ENCODE measurements at regions of chr1 and their contacts with region 1.

Region 1: GRCh38 chr1:67430352-67431155 is at the start of gene SERBP1:
- DNase-seq: peak; percentile 98
- ATAC-seq: peak; percentile 93
- H3K4me3 ChIP-seq: peak within 1 kb of the TSS; percentile 93
- H3K27ac ChIP-seq: peak within 1 kb of the TSS; percentile 71
- H3K4me1 ChIP-seq: peaks cover 16% of the 10 kb centered on the region
- H3K27me3 ChIP-seq: no peaks in the 10 kb centered on the region
- CTCF ChIP-seq: no peak
- total RNA-seq, gene SERBP1: 256 and 337 TPM in 2 replicates

Region 2: GRCh38 chr1:67053785-67054772 is 376.5 kb before region 1 on chr1 and contains the start of gene SLC35D1:
- CTCF ChIA-PET with region 1: no interaction called
- POLR2A ChIA-PET with region 1: no interaction called
- intact Hi-C with region 1: loop called (anchors 2 kb)
- DNase-seq: peak; percentile 54
- ATAC-seq: peak; percentile 64
- H3K4me3 ChIP-seq: peak within 1 kb of the TSS; percentile 92
- H3K27ac ChIP-seq: peak within 1 kb of the TSS; percentile 68
- H3K4me1 ChIP-seq: peaks cover 23% of the 10 kb centered on the region
- H3K27me3 ChIP-seq: no peaks in the 10 kb centered on the region
- CTCF ChIP-seq: no peak
- total RNA-seq, gene SLC35D1: 5.3 and 6.1 TPM in 2 replicates

Region 3: DNA sequence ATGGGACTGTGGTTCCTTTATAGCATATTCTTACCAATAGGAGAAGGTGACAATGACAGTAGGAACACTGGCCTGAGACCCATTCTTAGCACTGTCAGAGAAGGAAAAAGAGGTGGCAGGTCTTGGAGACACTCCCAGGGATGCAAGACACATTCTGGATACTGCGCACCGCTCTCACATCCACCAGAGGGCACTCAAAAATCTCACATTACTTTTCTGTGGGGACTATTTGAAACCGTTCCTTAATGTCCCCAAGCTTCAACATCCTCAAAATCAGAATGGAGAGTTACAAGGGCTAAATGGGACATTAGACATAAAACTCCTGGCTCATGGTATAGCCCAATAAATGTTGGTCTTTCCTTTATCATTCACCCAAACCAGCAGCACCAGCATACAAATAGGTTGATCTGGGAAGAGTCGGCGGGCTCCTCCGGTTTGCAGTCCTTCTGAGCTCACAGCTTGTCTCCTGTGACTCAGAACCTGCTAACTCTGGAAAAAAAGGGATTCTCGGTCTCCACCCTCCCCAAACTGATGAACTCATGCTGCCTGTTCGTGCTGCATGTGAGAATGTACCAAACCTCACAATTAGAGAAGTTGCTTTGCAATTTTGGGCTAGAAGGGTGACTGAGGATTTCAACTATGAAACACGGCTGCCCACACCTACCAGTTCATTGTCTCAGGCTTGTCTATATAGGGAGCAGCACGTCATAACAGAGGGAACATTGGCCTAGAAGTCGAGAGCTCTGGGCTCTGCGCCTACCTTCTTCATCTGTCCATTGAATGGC is 82.7 kb before region 1 on chr1:
- CTCF ChIA-PET with region 1: interaction called, 4 read pairs
- POLR2A ChIA-PET with region 1: no interaction called
- intact Hi-C with region 1: loop called (anchors 5 kb)
- DNase-seq: peak; percentile 76
- ATAC-seq: peak; percentile 94
- H3K4me3 ChIP-seq: peak overlapping the region; percentile 41; the same call in 1 of the 2 replicates
- H3K27ac ChIP-seq: no peak overlapping the region
- H3K4me1 ChIP-seq: peaks cover 13% of the 10 kb centered on the region
- H3K27me3 ChIP-seq: no peaks in the 10 kb centered on the region
- CTCF ChIP-seq: peak; percentile 92

Region 4: DNA sequence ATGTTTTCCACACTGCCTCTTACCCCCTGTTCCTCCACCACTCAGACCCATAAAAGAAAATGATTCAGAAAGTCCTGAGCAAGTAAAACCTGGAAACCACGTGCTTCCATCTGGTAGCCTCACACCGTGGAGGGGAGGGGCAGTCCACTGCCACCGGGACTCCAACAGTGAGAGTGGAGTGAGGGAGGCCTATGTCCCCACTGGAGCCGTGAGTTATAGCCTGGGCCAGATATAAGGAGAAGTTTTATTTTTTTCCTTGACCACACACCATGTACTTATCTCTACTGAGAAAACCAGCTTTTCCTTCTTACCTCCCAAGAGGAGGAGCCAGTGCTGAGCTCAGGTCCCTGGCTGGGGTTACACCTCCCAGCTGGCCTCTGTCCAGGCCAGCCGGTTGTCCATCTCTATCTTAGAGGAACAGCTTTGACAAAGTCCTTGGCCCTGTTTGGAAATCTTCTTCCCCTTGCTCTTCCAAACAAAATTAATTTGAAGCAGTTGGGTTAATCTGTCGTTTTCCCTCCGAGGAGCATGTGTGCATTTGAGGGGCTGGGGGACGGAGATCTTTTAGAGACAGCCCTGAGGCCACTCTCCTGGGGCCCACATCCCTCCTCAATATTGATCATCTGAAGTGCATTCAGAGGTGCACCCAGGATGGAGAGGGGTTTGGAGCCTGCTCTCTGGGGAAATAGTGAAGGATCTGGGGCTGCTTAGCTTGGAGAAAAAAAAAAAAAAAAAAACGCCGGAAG is 48.8 kb after region 1 on chr1:
- CTCF ChIA-PET with region 1: no interaction called
- POLR2A ChIA-PET with region 1: no interaction called
- intact Hi-C with region 1: loop called (anchors 5 kb)
- DNase-seq: peak; percentile 57
- ATAC-seq: peak; percentile 93
- H3K4me3 ChIP-seq: no peak overlapping the region
- H3K27ac ChIP-seq: no peak overlapping the region
- H3K4me1 ChIP-seq: peaks cover 7% of the 10 kb centered on the region; the same call in 1 of the 2 replicates
- H3K27me3 ChIP-seq: no peaks in the 10 kb centered on the region
- CTCF ChIP-seq: no peak

Region 5: GRCh38 chr1:67489643-67490042 is 59.1 kb after region 1 on chr1:
- CTCF ChIA-PET with region 1: no interaction called
- POLR2A ChIA-PET with region 1: no interaction called
- intact Hi-C with region 1: loop called (anchors 2 kb)
- DNase-seq: peak; percentile 42
- ATAC-seq: peak; percentile 86
- H3K4me3 ChIP-seq: no peak overlapping the region
- H3K27ac ChIP-seq: no peak overlapping the region
- H3K4me1 ChIP-seq: no peaks in the 10 kb centered on the region
- H3K27me3 ChIP-seq: no peaks in the 10 kb centered on the region
- CTCF ChIP-seq: peak; percentile 55; the same call in 1 of the 2 replicates

Region 6: GRCh38 chr1:68293609-68294366 is 863.2 kb after region 1 on chr1:
- CTCF ChIA-PET with region 1: no interaction called
- POLR2A ChIA-PET with region 1: no interaction called
- intact Hi-C with region 1: no loop called
- DNase-seq: no peak
- ATAC-seq: no peak
- H3K4me3 ChIP-seq: no peak overlapping the region
- H3K27ac ChIP-seq: no peak overlapping the region
- H3K4me1 ChIP-seq: no peaks in the 10 kb centered on the region
- H3K27me3 ChIP-seq: no peaks in the 10 kb centered on the region
- CTCF ChIP-seq: no peak